IMR-90 (cell line): ENCODE measurements at regions of chr12 and their contacts with region 1.

Region 1: GRCh38 chr12:52087961-52088820 is 8.7 kb downstream of the SMIM41 start:
- DNase-seq: no peak
- ATAC-seq: no peak
- H3K4me3 ChIP-seq: no peak overlapping the region
- H3K27ac ChIP-seq: no peak overlapping the region
- H3K4me1 ChIP-seq: peaks cover 2% of the 10 kb centered on the region; the same call in 1 of the 2 replicates
- H3K27me3 ChIP-seq: peaks cover 20% of the 10 kb centered on the region
- CTCF ChIP-seq: no peak
- POLR2A ChIP-seq: no peak
- RAD21 ChIP-seq: no peak

Region 2: DNA sequence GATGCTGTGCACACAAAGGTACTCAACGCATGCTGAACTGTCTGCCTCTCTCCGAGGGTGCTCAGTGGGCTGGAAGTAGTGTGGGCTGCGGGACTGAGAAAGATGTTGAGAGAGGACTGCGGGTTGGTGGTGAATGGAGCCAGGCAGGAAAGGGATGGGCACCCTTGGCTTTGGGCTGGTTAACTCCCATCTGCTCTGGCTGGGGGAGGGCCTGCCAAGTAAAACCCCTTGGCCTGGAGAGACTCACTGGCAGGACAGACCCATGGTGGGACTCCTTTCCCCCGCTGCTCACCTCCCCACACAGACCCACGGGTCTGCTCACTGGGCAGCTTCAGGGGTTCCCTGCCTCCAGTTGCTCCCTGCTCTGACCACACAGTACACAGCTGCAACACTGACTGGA is 49.5 kb after region 1 on chr12:
- CTCF ChIA-PET with region 1: no interaction called
- POLR2A ChIA-PET with region 1: no interaction called
- dilution Hi-C with region 1: no loop called
- in situ Hi-C with region 1: no loop called
- intact Hi-C with region 1: loop called (anchors 1 kb)
- DNase-seq: no peak
- ATAC-seq: no peak
- H3K4me3 ChIP-seq: no peak overlapping the region
- H3K27ac ChIP-seq: no peak overlapping the region
- H3K4me1 ChIP-seq: peaks cover 2% of the 10 kb centered on the region
- H3K27me3 ChIP-seq: peaks cover 17% of the 10 kb centered on the region
- CTCF ChIP-seq: no peak
- POLR2A ChIP-seq: no peak
- RAD21 ChIP-seq: no peak

Region 3: GRCh38 chr12:52213512-52214420 is 125.6 kb after region 1 on chr12:
- CTCF ChIA-PET with region 1: no interaction called
- POLR2A ChIA-PET with region 1: no interaction called
- dilution Hi-C with region 1: no loop called
- in situ Hi-C with region 1: no loop called
- intact Hi-C with region 1: no loop called
- DNase-seq: peak; percentile 78
- ATAC-seq: peak; percentile 98
- H3K4me3 ChIP-seq: no peak overlapping the region
- H3K27ac ChIP-seq: no peak overlapping the region
- H3K4me1 ChIP-seq: peaks cover 9% of the 10 kb centered on the region
- H3K27me3 ChIP-seq: no peaks in the 10 kb centered on the region
- CTCF ChIP-seq: peak; percentile 100
- POLR2A ChIP-seq: no peak
- RAD21 ChIP-seq: peak; percentile 100